ENCODE measurements at regions of chr15 and their contacts with region 1.

Region 1: GRCh38 chr15:67303490-67304363 is 49.1 kb downstream of the IQCH start:
- DNase-seq: peak; percentile 6
- H3K4me3 ChIP-seq: no peak overlapping the region
- H3K27ac ChIP-seq: no peak overlapping the region
- H3K4me1 ChIP-seq: peaks cover 3 to 13% of the 10 kb centered on the region in 2 experiments; a peak in 3 of 4 replicates
- H3K27me3 ChIP-seq: no peaks in the 10 kb centered on the region
- CTCF ChIP-seq: peak; percentile 64
- EP300 ChIP-seq: no peak
- RAD21 ChIP-seq: peak; percentile 88

Region 2: DNA sequence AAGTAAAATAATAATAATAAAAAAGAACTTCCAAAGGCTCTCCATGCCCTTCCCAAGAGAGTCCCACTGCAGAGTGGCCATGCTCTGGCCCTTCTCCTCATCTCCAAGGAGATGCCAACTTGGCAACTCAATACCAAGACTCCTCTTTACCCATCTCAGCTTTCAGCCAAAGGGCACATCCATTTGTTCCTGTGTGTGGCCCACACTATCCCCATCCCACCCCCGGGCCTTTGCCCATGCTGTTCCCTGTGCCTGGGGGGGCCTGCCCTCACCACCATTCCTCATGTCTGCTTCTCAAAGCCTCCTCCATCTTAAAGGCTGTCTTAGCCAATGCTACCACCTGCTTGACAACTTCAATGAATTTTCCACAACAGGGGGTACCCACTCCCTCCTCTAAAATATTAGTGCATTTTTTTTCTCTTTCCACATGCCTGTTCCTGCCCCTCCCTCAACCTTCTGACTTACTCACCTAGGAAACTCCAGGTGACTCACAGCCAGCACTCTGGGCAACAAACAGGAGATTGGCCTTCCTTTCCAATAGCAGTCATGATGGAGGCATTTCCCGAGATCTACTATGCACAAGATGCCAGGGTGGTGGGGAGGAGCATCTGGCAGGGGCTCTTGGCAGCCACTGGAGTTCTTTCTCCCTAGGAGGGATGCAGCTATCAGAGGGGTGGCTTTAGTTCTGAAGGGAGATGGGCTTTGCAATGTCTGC is 347.7 kb before region 1 on chr15:
- CTCF ChIA-PET with region 1: interaction called, 10 read pairs
- POLR2A ChIA-PET with region 1: no interaction called
- DNase-seq: no peak
- H3K4me3 ChIP-seq: no peak overlapping the region
- H3K27ac ChIP-seq: no peak overlapping the region
- H3K4me1 ChIP-seq: no peaks in the 10 kb centered on the region
- H3K27me3 ChIP-seq: no peaks in the 10 kb centered on the region
- CTCF ChIP-seq: no peak
- EP300 ChIP-seq: peak in 1 of 2 experiments; percentile 69; a peak in 2 of 4 replicates
- RAD21 ChIP-seq: no peak

Region 3: DNA sequence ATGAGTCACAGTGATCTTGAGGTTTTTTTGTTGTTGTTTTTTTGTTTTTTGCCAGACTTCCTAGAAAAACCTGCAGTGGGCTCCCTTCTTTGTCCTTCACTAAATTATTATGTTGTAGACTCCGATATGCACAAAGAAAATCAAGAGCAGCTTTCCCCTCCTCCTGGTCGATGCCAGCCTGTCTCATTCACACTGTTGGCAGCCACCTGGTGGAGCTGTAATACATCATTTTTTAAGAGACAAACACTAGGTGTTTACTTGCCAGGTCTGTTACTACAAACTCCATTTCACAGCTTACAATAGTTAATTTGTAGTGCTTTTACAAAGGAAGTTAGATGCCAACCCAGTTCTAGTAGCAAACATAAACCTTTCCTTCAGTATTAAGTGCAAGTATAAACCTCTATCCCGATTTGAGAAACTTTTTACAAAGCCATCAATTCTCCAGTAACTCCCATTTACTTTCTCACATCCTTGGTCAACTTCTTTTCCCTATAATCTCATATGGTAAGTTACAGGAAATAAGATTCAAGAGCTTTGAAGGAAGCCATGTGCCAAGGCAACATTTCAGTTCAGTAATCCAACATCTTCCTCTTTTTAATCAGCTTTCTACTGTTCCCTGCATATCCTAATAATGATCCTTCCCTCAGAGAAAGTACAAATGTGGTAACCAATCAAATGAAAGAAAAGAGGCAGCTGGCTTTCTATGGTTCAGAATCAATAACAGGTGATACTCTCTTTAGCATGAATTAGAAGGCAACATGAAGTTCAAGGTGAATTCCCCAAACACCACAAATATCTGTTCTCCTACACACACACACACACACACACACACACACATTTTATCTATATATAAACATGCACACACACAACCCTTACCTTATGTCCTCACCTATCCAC is 63.2 kb before region 1 on chr15:
- CTCF ChIA-PET with region 1: interaction called, 20 read pairs
- POLR2A ChIA-PET with region 1: no interaction called
- DNase-seq: peak; percentile 57
- H3K4me3 ChIP-seq: no peak overlapping the region
- H3K27ac ChIP-seq: 0 out of 4 replicates have a peak overlapping the region, but pooled peaks of 1 of the 2 experiments have one; percentile 6
- H3K4me1 ChIP-seq: peaks cover 7 to 13% of the 10 kb centered on the region in 2 experiments; a peak in 3 of 4 replicates
- H3K27me3 ChIP-seq: no peaks in the 10 kb centered on the region
- CTCF ChIP-seq: peak; percentile 51
- EP300 ChIP-seq: no peak
- RAD21 ChIP-seq: peak; percentile 67

Region 4: DNA sequence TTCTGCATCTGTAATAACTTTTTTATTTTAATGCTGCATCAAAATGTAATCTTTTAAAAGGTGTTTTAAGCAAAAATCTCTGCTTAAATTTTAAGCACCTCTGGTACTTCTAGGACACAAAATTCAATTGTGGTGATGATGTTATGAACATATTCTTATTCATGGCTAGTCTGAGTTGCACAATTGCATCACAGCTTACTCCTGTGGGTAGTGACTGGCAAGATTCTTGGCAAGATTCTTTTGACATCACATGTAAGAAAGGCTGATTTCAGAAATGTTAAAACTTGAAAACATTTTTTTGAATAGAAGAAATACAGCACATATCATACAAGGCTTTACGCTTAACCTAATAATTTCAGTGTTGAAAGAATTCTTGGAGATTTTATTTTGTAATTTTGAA is 13.4 kb before region 1 on chr15:
- CTCF ChIA-PET with region 1: interaction called, 16 read pairs
- POLR2A ChIA-PET with region 1: no interaction called
- DNase-seq: no peak
- H3K4me3 ChIP-seq: no peak overlapping the region
- H3K27ac ChIP-seq: no peak overlapping the region
- H3K4me1 ChIP-seq: no peaks in the 10 kb centered on the region
- H3K27me3 ChIP-seq: no peaks in the 10 kb centered on the region
- CTCF ChIP-seq: no peak
- EP300 ChIP-seq: no peak
- RAD21 ChIP-seq: no peak

Region 5: GRCh38 chr15:67812241-67812644 is 508.5 kb after region 1 on chr15:
- CTCF ChIA-PET with region 1: no interaction called
- POLR2A ChIA-PET with region 1: no interaction called
- DNase-seq: no peak
- H3K4me3 ChIP-seq: no peak overlapping the region
- H3K27ac ChIP-seq: no peak overlapping the region
- H3K4me1 ChIP-seq: no peaks in the 10 kb centered on the region
- H3K27me3 ChIP-seq: no peaks in the 10 kb centered on the region
- CTCF ChIP-seq: no peak
- EP300 ChIP-seq: no peak
- RAD21 ChIP-seq: no peak